Head of caudate nucleus (tissue), 42 donors: ENCODE measurements at regions of chr5 and their contacts with region 1.

Region 1: DNA sequence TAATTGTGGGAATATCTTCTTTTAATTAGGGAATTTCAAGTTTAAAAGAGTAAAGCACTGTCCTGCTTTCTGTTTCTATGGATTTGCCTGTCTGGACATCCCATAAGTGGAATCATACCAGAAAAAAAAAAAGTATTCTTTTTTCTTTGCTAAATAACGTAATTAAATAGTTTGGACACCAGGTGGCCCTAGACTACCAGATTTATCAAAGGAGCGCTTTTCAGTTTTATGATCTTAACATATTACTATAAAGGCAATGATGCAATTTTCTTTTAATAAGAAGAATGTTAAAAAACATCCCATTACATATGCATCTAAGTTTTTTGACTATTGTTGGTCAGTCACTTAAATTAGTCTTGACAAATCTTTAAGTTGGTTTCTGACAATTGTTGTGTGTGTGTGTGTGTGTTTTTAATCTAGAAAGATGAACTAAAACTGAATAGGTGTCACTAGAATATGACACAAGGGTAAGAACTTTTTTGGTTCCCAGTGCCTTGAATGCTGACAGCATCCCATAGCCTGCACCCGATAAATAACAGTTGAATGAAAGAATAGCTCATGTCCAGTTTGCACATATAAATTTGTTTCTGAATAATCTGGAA is 49.5 kb downstream of the C5orf22 start:
- DNase-seq: peak in 7 of 42 donors; percentile 7 to 48 (median 26)

Region 2: DNA sequence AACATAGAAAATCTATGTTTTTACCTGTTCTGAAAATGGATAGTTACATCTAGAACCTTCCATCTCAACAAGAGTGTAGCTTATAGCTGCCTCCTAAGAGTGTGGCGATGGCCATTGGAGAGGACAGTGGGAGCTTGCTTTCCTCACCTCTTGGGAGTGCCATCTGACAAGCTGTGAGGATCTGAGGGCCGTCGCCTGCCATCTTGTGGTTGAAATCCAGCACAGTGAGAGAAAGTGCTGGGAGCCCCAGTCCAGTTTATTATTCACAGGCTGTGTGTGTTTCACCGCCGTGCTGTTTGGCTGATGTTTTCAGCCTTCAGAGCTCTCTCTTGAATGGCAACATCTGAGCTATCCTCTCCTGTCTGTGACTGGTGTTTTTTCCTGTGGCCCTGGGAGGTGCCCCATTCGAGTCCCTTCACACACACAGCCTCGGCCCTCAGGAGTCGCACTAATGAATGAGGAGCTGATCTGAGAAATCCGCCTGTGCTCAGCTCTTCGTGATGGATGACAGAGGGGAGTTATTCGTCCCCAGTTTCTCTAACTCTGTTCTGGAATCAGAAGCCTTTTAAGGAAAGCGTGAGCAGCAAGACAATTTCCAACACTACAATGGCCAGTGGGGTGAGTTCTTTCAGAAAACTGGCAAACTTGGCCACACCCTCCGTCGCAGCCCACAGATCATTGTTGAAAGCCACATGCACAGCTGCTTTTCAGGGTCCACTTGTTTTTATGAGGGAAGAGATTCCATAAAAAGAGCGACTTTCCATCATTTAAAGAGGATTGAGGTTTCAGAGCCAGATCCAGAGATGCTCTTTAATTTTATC is 227.7 kb after region 1 on chr5:
- intact Hi-C with region 1: loop called (anchors 5 kb)
- DNase-seq: peak; percentile 72 to 95 (median 87)

Region 3: GRCh38 chr5:32083981-32084430 is 502.4 kb after region 1 on chr5:
- intact Hi-C with region 1: loop called (anchors 10 kb)
- DNase-seq: peak in 21 of 42 donors; percentile 20 to 76 (median 42)